ENCODE measurements at regions of chr2 and their contacts with region 1.

Region 1: GRCh38 chr2:99725820-99726219 is 236.0 kb upstream of the REV1 start:
- DNase-seq: no peak
- ATAC-seq: no peak

Region 2: DNA sequence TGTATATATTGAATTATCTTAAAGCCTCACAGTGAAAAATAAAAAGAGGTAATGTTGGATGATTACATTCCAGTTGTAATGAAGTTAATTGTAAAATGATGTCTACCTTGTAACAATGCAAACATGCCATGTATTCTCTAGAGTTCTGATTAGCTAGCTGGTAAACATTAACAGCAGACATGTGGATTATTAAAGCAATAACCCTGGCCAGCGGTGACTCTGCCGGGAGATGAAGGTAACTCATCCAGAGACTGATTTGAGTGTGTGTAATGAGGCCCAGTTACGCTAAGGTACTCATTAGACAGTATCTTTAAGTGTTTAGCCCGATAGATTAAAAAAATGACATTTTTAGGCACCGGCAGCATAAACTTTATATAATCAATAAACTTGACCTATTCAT is 156.4 kb before region 1 on chr2:
- intact Hi-C with region 1: loop called in 1 of 2 experiments (anchors 10 kb)
- DNase-seq: no peak
- ATAC-seq: no peak

Region 3: DNA sequence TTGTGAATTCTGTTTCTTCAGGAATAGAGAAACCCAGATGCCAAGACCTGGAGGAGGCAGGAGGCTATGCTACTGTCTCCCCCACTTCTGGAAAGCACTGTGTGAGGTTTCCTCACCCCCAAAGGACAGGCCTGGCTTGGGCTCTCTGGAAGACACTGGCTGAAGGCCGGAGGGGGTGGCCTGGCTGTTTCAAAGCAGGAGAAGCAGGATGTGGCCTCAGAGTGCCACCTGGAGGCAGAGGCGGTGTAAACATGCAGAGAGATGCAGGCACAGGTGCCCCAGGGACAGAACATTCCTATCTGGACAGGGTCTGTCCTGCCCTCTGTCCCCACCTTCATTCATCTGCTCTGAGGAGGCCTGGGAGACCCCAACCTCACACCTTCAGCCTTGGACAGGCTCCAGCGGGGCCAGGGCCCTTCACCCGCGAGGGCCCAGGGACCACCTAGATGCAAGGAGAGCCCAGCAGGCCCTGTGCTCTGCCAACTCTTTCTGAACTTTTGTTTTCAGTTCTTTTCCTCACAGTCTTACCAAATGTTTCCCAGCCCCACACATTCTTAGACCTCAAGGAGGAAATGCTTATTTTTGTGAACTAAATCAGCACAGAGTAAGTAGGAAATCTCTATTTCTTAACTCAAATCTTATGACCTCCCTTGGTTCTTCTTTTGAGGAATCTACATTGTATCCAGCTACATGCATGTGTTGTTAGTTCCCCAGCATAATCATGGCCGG is 517.2 kb after region 1 on chr2:
- intact Hi-C with region 1: loop called in 1 of 2 experiments (anchors 10 kb)
- DNase-seq: peak; percentile 69
- ATAC-seq: peak; percentile 80 to 88